ENCODE measurements at regions of chr9 and their contacts with region 1.

Region 1: DNA sequence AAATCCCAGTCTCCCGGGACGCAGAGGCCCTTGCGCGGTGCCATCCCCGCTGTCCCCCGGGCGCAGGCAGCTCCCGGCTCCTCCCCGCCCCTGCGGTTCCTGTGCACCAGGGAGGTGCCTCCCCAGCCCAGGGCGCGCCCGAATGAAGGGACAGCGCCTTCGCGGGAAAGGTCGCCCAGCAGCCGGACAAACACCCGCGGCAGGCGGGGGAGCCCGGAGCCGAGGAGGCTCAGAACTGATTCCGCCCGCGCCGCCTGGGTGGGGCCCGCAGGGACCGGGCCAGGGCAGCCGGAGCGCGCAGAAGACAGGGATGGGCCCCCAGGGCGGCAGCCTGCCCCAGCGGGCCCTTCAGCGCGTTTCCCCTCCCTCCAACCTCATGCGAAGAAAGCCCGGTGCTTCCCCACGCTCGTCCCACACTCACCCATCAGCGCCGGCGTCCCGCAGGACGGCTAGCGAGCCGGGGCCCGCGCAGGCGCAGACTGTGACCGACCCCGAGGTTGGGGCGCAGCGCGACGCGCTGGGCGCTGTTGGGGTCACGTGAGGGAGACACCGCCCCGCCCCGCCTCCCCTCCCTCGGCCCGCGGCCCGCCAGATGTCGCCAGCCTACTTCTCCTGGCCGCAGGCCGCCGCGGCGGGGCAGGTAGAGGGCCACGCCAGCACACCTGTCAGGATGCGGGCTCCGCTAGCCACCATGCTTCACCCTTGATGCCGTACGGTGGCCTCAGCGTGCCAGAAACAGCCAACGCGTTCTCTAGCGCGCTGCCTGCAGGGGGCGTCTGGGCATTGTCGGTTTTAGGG is at the start of gene SLC25A51:
- DNase-seq: peak; percentile 87 to 93 (median 90)
- H3K4me3 ChIP-seq: peak within 1 kb of the TSS; percentile 51 to 100 (median 94)
- H3K27ac ChIP-seq: peak within 1 kb of the TSS; percentile 34 to 97 (median 89)
- H3K27me3 ChIP-seq: no peaks in the 10 kb centered on the region
- CTCF ChIP-seq: peak; percentile 83 to 99 (median 94)
- total RNA-seq, gene SLC25A51: 21.6 to 40.8 (median 32.4) TPM

Region 2: DNA sequence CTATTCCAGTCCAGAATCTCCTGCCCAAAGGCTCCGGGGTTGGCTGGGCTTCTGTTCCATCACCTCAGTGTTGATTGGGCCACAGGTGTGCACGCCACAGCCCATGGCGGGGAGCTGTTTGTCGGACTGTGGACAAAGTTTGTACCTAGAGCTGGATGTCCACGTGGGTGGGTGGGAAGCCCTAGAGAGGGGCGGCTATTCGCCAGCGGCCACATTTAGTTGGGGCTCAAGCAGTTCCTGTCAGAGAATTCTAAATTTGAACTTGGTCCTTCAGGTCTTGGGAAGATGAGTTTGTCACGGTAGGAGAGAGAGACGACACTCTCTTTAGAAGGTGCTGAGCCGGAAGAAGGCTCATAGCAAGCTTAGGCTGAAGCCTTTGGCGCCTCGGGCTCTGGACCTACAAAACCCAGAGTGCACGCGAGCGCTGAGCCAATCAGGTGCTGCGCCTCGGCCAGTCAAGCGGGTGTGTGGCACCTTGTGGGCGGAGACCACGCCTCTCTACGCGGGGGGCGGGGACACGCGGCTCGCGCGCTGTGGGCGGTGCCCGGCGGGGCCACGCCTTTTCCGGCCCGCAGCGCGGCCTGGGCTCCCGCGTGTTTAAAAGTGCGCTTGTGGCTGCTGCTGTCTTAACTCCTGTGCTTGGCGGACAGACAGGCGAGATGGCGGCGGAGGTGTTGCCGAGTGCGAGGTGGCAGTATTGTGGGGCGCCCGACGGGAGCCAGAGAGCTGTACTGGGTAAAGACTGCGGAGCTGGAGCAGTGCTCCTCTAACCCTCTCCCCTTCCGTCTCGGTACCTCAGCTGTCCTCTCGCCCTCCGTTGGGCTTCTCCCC is 418.2 kb before region 1 on chr9 and contains the start of gene POLR1E:
- intact Hi-C with region 1: loop called in 1 of 2 experiments (anchors 5 kb)
- DNase-seq: peak; percentile 82 to 97 (median 95)
- H3K4me3 ChIP-seq: peak within 1 kb of the TSS; percentile 57 to 97 (median 83)
- H3K27ac ChIP-seq: peak within 1 kb of the TSS in 37 of 59 donors; percentile 1 to 80 (median 46)
- H3K27me3 ChIP-seq: no peaks in the 10 kb centered on the region
- CTCF ChIP-seq: peak in 16 of 56 donors; percentile 7 to 46 (median 22)
- total RNA-seq, gene POLR1E: 10.9 to 24.1 (median 16.7) TPM

Region 3: DNA sequence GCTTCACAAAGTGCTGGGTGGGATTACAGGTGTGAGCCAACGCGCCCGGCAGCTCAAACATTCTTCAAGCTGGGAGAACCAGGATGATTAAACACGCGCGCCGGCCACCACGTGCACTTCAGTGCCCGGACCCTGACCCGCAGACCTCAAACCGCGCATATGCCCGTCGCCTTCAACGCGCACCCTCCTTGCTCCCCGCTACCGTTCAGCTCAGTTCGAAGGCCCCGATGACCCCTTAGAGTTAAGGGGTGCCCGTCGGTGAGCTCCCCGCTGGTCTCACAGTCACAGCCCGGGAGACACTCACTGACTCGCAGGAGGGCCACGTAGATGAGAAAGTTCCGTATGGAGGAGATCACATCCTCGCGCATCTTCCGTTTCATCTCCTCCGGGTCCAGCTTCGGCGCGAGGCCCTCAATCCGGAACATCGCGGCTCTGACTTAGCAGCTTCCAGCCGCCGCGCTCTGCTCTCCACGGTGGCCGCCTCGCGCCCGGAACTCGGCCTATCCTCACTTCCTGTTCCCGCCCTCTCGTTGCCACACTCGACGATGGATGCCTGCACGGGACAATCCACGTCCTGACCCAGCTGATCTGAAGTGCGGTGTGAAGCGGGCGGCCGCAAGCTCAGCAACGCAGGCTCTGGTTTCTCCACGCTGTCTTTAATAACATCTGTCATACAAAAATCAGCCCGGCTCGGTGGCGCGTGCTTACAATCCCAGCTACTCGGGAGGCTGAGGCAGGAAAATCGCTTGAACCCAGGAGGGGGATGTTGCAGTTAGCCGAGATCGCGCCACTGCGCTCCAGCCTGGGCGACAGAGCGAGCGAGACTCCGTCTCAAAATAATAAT is 311.5 kb before region 1 on chr9 and contains the start of gene TOMM5:
- intact Hi-C with region 1: loop called in 1 of 2 experiments (anchors 5 kb)
- DNase-seq: peak; percentile 89 to 96 (median 93)
- H3K4me3 ChIP-seq: peak within 1 kb of the TSS; percentile 63 to 100 (median 94)
- H3K27ac ChIP-seq: peak within 1 kb of the TSS in 58 of 59 donors; percentile 43 to 97 (median 87)
- H3K27me3 ChIP-seq: no peaks in the 10 kb centered on the region
- CTCF ChIP-seq: peak in 41 of 56 donors; percentile 3 to 59 (median 35)
- total RNA-seq, gene TOMM5: 30.0 to 71.9 (median 50.0) TPM

Region 4: GRCh38 chr9:37800631-37801286 is 103.1 kb before region 1 on chr9 and contains the start of gene DCAF10:
- intact Hi-C with region 1: loop called in 1 of 2 experiments (anchors 2 kb)
- DNase-seq: peak; percentile 70 to 93 (median 84)
- H3K4me3 ChIP-seq: peak within 1 kb of the TSS; percentile 58 to 99 (median 93)
- H3K27ac ChIP-seq: peak within 1 kb of the TSS in 55 of 59 donors; percentile 43 to 91 (median 80)
- H3K27me3 ChIP-seq: no peaks in the 10 kb centered on the region
- CTCF ChIP-seq: peak in 41 of 56 donors; percentile 12 to 55 (median 33)
- total RNA-seq, gene DCAF10: 17.1 to 40.1 (median 27.8) TPM

Region 5: GRCh38 chr9:37852222-37852621 is 51.6 kb before region 1 on chr9:
- intact Hi-C with region 1: no loop called
- DNase-seq: no peak
- H3K4me3 ChIP-seq: no peak overlapping the region
- H3K27ac ChIP-seq: no peak overlapping the region
- H3K27me3 ChIP-seq: no peaks in the 10 kb centered on the region
- CTCF ChIP-seq: no peak

Region 6: GRCh38 chr9:37976714-37977477 is 73.0 kb after region 1 on chr9:
- intact Hi-C with region 1: no loop called
- DNase-seq: no peak
- H3K4me3 ChIP-seq: no peak overlapping the region
- H3K27ac ChIP-seq: peak overlapping the region in 42 of 59 donors; percentile 2 to 99 (median 52)
- H3K27me3 ChIP-seq: no peaks in the 10 kb centered on the region
- CTCF ChIP-seq: no peak

Region 7: GRCh38 chr9:38208206-38208901 is 304.5 kb after region 1 on chr9:
- intact Hi-C with region 1: no loop called
- DNase-seq: no peak
- H3K4me3 ChIP-seq: no peak overlapping the region
- H3K27ac ChIP-seq: no peak overlapping the region
- H3K27me3 ChIP-seq: peaks cover 0 to 3% (median 0%) of the 10 kb centered on the region in 45 donors
- CTCF ChIP-seq: no peak

Region 8: GRCh38 chr9:38392235-38393127 is 488.6 kb after region 1 on chr9 and contains the start of gene ALDH1B1:
- intact Hi-C with region 1: loop called in 1 of 2 experiments (anchors 5 kb)
- DNase-seq: peak; percentile 45 to 88 (median 74)
- H3K4me3 ChIP-seq: peak within 1 kb of the TSS; percentile 54 to 91 (median 80)
- H3K27ac ChIP-seq: peak within 1 kb of the TSS in 10 of 59 donors; percentile 16 to 72 (median 50)
- H3K27me3 ChIP-seq: no peaks in the 10 kb centered on the region
- CTCF ChIP-seq: peak in 18 of 56 donors; percentile 10 to 47 (median 15)
- total RNA-seq, gene ALDH1B1: 5.5 to 19.4 (median 9.7) TPM